B cell (primary cell): ENCODE measurements at regions of chr1 and their contacts with region 1.

Region 1: GRCh38 chr1:38873027-38873969 is at the start of gene MYCBP:
- DNase-seq: peak; percentile 97
- ATAC-seq: peak; percentile 99
- H3K4me3 ChIP-seq: peak within 1 kb of the TSS; percentile 77 to 93 (median 85)
- H3K4me3 Mint-ChIP-seq: peak within 1 kb of the TSS; percentile 94
- H3K27ac ChIP-seq: peak within 1 kb of the TSS; percentile 39 to 82
- H3K27ac Mint-ChIP-seq: peak within 1 kb of the TSS; percentile 92
- H3K4me1 ChIP-seq: peaks cover 13 to 21% of the 10 kb centered on the region in 2 donors
- H3K4me1 Mint-ChIP-seq: peaks cover 26% of the 10 kb centered on the region
- H3K27me3 ChIP-seq: no peaks in the 10 kb centered on the region
- H3K27me3 Mint-ChIP-seq: no peaks in the 10 kb centered on the region
- CTCF ChIP-seq: no peak
- total RNA-seq, gene MYCBP: 7.8 and 8.9 TPM in 2 replicates

Region 2: DNA sequence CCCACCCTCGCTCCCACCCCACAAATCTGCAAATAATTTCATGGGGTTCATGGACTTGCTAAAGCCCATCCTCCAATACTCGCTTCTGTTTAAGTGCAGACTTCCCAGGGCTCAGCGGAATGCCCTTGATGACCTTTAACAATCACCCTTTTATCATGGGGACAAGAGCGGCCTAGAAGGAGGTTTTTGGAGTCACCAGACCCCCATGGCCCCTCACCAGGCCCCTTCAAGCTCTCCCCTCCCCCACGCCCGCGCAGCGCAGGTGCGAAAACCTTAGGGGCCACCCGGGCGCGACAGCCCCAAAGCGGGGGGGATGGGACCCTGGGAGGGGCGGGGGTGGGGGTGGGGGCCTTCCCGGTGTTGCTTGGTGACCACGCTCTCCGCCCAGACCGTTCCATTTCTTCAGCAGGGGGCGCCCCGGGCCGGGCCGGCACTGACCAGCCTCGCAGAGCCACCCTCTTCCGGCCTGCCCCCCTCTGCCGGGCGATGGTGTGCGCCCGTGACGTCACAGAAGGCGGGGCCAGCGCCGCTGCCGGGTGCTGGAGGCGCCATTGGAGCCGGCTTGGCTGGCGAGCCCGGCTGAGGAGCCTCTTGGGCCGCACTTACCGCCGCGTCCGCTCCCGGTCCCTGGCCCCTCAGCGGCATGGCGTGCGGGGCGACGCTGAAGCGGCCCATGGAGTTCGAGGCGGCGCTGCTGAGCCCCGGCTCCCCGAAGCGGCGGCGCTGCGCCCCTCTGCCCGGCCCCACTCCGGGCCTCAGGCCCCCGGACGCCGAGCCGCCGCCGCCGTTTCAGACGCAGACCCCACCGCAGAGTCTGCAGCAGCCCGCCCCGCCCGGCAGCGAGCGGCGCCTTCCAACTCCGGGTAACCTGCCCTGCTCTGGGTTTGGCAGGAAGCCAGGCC is 117.7 kb after region 1 on chr1 and contains the start of gene AKIRIN1:
- CTCF ChIA-PET with region 1: no interaction called
- POLR2A ChIA-PET with region 1: interaction called, 3 read pairs
- intact Hi-C with region 1: loop called (anchors 1 kb)
- DNase-seq: peak; percentile 96
- ATAC-seq: peak; percentile 92
- H3K4me3 ChIP-seq: peak within 1 kb of the TSS; percentile 58 to 89 (median 80)
- H3K4me3 Mint-ChIP-seq: peak within 1 kb of the TSS; percentile 89
- H3K27ac ChIP-seq: peak within 1 kb of the TSS; percentile 86 to 95
- H3K27ac Mint-ChIP-seq: peak within 1 kb of the TSS; percentile 89
- H3K4me1 ChIP-seq: peaks cover 19 to 22% of the 10 kb centered on the region in 2 donors
- H3K4me1 Mint-ChIP-seq: peaks cover 30% of the 10 kb centered on the region
- H3K27me3 ChIP-seq: peaks cover 0 to under 1% (median 0%) of the 10 kb centered on the region in 4 experiments
- H3K27me3 Mint-ChIP-seq: peaks cover 3% of the 10 kb centered on the region
- CTCF ChIP-seq: no peak
- total RNA-seq, gene AKIRIN1: 59.7 and 61.9 TPM in 2 replicates

Region 3: GRCh38 chr1:39026051-39026865 is 153.0 kb after region 1 on chr1 and contains the start of gene NDUFS5:
- CTCF ChIA-PET with region 1: no interaction called
- POLR2A ChIA-PET with region 1: no interaction called
- intact Hi-C with region 1: loop called (anchors 5 kb)
- DNase-seq: peak; percentile 88
- ATAC-seq: peak; percentile 91
- H3K4me3 ChIP-seq: peak within 1 kb of the TSS; percentile 85 to 98 (median 98)
- H3K4me3 Mint-ChIP-seq: peak within 1 kb of the TSS; percentile 89
- H3K27ac ChIP-seq: peak within 1 kb of the TSS; percentile 88 to 92
- H3K27ac Mint-ChIP-seq: peak within 1 kb of the TSS; percentile 86
- H3K4me1 ChIP-seq: peaks cover 10 to 16% of the 10 kb centered on the region in 2 donors
- H3K4me1 Mint-ChIP-seq: peaks cover 20% of the 10 kb centered on the region
- H3K27me3 ChIP-seq: no peaks in the 10 kb centered on the region
- H3K27me3 Mint-ChIP-seq: no peaks in the 10 kb centered on the region
- CTCF ChIP-seq: no peak
- total RNA-seq, gene NDUFS5: 47.2 and 55.8 TPM in 2 replicates

Region 4: DNA sequence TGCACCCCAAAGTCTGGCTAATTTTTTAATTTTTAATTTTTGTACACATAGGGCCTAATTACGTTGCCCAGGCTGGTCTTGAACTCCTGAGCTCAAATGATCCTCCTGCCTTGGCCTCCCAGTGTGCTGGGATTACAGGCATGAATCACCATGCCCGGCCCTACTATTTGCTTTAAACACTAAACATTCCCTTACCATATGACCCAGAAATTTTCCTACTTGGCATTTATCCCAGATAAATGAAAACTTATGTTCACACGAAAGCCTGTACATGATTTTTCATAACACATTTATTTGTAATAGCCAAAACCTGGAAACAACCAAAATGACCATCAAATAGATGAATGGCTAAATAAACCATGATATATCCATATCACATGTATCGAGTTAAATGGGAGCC is 188.7 kb after region 1 on chr1:
- CTCF ChIA-PET with region 1: no interaction called
- POLR2A ChIA-PET with region 1: interaction called, 10 read pairs
- intact Hi-C with region 1: no loop called
- DNase-seq: no peak
- ATAC-seq: no peak
- H3K4me3 ChIP-seq: no peak overlapping the region
- H3K4me3 Mint-ChIP-seq: no peak overlapping the region
- H3K27ac ChIP-seq: no peak overlapping the region
- H3K27ac Mint-ChIP-seq: no peak overlapping the region
- H3K4me1 ChIP-seq: no peaks in the 10 kb centered on the region
- H3K4me1 Mint-ChIP-seq: peaks cover 4% of the 10 kb centered on the region
- H3K27me3 ChIP-seq: no peaks in the 10 kb centered on the region
- H3K27me3 Mint-ChIP-seq: no peaks in the 10 kb centered on the region
- CTCF ChIP-seq: no peak